ENCODE measurements at regions of chr2 and their contacts with region 1.

Region 1: DNA sequence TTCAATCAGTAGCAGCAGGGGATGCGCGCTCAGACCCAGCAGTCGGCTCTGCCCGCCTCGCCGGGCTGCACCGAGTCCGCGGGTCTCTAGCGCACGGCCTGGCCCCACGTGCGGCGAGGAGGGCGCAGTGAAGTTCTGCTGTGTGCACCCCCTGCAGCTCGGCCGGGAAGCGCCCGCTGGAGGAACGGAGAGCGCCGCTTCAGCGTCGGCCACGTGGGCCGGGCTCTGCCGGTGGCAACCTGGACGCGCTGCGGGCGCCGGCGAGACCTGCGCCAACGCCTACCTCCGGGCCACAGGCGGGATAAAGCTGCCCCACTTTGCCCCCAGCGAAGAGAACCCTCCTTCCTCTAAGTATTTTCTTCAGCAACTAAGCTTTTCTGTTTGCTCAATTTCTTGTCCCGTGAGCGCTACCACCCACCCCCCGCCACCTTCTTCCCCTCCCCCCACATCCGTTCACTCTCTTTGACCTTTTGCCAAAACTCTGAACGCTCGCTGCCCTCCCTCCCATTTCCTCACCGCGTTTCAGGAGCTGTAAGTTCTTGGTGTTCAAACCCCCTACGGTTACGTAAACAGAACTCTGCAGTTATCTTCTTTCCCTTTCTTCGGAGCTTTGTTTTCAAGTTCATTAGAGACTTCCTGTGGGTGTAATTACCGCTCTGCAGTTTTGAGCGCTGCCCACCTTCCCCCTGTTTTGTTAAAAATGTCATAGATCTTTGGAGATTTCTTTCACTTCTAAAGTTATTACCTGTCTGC is 42.6 kb upstream of the EDAR start:
- DNase-seq: peak; percentile 60 to 92 (median 82)
- ATAC-seq: peak; percentile 78 to 84 (median 80)
- H3K4me3 ChIP-seq: peak overlapping the region; percentile 55 to 56
- H3K4me3 Mint-ChIP-seq: peak overlapping the region; percentile 61 to 81 (median 76)
- H3K27ac ChIP-seq: peak overlapping the region; percentile 92
- H3K27ac Mint-ChIP-seq: peak overlapping the region; percentile 91 to 98
- H3K4me1 ChIP-seq: peaks cover 45 to 76% of the 10 kb centered on the region in 2 experiments
- H3K4me1 Mint-ChIP-seq: peaks cover 71 to 72% (median 71%) of the 10 kb centered on the region in 3 donors
- H3K27me3 ChIP-seq: no peaks in the 10 kb centered on the region
- H3K27me3 Mint-ChIP-seq: no peaks in the 10 kb centered on the region

Region 2: DNA sequence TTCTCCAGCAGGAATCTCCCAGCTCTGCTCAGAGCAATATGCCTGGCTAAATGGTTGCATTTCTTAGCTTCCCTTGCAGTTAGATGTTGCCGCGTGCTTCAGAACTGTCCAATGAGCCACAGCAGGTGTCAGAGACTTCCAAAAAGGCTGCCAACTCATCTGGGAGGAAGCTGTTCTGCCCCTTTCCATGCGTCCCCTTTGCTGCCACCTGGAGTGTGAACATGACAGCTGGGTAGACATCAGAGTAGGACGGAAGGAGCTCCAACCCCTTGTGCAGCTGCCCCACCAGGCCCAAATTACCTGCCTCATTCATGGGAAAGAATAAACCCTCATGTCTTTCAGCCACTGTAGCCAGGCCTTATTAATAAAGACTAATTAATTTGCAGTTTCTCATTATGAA is 36.1 kb before region 1 on chr2:
- CTCF ChIA-PET with region 1: no interaction called
- POLR2A ChIA-PET with region 1: no interaction called
- DNase-seq: no peak
- ATAC-seq: no peak
- H3K4me3 ChIP-seq: no peak overlapping the region
- H3K4me3 Mint-ChIP-seq: no peak overlapping the region
- H3K27ac ChIP-seq: no peak overlapping the region
- H3K27ac Mint-ChIP-seq: no peak overlapping the region
- H3K4me1 ChIP-seq: peaks cover 8 to 12% of the 10 kb centered on the region in 2 experiments
- H3K4me1 Mint-ChIP-seq: peaks cover 14 to 35% (median 16%) of the 10 kb centered on the region in 3 donors
- H3K27me3 ChIP-seq: no peaks in the 10 kb centered on the region
- H3K27me3 Mint-ChIP-seq: no peaks in the 10 kb centered on the region

Region 3: GRCh38 chr2:109005686-109006204 is 25.9 kb before region 1 on chr2:
- CTCF ChIA-PET with region 1: interaction called, 3 to 11 read pairs
- POLR2A ChIA-PET with region 1: interaction called in 1 of 2 experiments, 6 read pairs
- DNase-seq: no peak
- ATAC-seq: no peak
- H3K4me3 ChIP-seq: no peak overlapping the region
- H3K4me3 Mint-ChIP-seq: no peak overlapping the region
- H3K27ac ChIP-seq: no peak overlapping the region
- H3K27ac Mint-ChIP-seq: no peak overlapping the region
- H3K4me1 ChIP-seq: peaks cover 11 to 14% of the 10 kb centered on the region in 2 experiments
- H3K4me1 Mint-ChIP-seq: peaks cover 18 to 57% (median 31%) of the 10 kb centered on the region in 3 donors
- H3K27me3 ChIP-seq: no peaks in the 10 kb centered on the region
- H3K27me3 Mint-ChIP-seq: no peaks in the 10 kb centered on the region

Region 4: DNA sequence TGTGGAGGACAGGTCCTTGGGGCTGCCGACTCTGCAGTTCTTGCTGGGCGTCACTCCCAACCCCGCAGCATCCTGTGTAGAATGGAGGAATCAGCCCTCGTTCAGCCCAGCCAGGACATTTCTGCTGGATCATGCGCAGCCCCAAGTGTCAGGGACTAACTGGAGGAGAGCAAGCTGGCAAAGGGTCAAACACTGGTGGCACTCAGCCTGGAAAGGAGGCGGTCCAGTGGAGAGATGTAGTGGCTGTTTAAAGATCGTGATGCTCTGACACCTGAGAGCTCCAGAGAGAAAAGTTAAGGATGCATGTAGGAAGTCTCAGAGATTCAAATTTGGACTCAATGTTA is 33.7 kb after region 1 on chr2:
- CTCF ChIA-PET with region 1: no interaction called
- POLR2A ChIA-PET with region 1: no interaction called
- DNase-seq: no peak
- ATAC-seq: no peak
- H3K4me3 ChIP-seq: no peak overlapping the region
- H3K4me3 Mint-ChIP-seq: no peak overlapping the region
- H3K27ac ChIP-seq: no peak overlapping the region
- H3K27ac Mint-ChIP-seq: no peak overlapping the region
- H3K4me1 ChIP-seq: peaks cover 4 to 8% of the 10 kb centered on the region in 2 experiments
- H3K4me1 Mint-ChIP-seq: peaks cover 20 to 41% (median 29%) of the 10 kb centered on the region in 3 donors
- H3K27me3 ChIP-seq: peaks cover 0 to 16% of the 10 kb centered on the region in 2 experiments
- H3K27me3 Mint-ChIP-seq: no peaks in the 10 kb centered on the region

Region 5: GRCh38 chr2:109135359-109136197 is 103.9 kb after region 1 on chr2:
- CTCF ChIA-PET with region 1: no interaction called
- POLR2A ChIA-PET with region 1: no interaction called
- DNase-seq: no peak
- ATAC-seq: no peak
- H3K4me3 ChIP-seq: no peak overlapping the region
- H3K4me3 Mint-ChIP-seq: no peak overlapping the region
- H3K27ac ChIP-seq: no peak overlapping the region
- H3K27ac Mint-ChIP-seq: peak overlapping the region in 1 of 2 donors; percentile 18
- H3K4me1 ChIP-seq: peaks cover 3 to 4% of the 10 kb centered on the region in 2 experiments
- H3K4me1 Mint-ChIP-seq: peaks cover 25 to 59% (median 57%) of the 10 kb centered on the region in 3 donors
- H3K27me3 ChIP-seq: peaks cover 0 to 13% of the 10 kb centered on the region in 2 experiments
- H3K27me3 Mint-ChIP-seq: peaks cover 0 to 7% of the 10 kb centered on the region in 2 donors